CD4-positive, alpha-beta T cell (primary cell): ENCODE measurements at regions of chr2 and their contacts with region 1.

Region 1: GRCh38 chr2:38602732-38603401 is at the start of gene HNRNPLL:
- DNase-seq: peak; percentile 87 to 96 (median 94)
- ATAC-seq: peak; percentile 80
- H3K4me3 ChIP-seq: peak within 1 kb of the TSS; percentile 62
- H3K4me3 Mint-ChIP-seq: peak within 1 kb of the TSS; percentile 99
- H3K27ac ChIP-seq: peak within 1 kb of the TSS; percentile 58 to 66
- H3K27ac Mint-ChIP-seq: peak within 1 kb of the TSS; percentile 97
- H3K4me1 ChIP-seq: peaks cover 28% of the 10 kb centered on the region
- H3K4me1 Mint-ChIP-seq: peaks cover 56% of the 10 kb centered on the region
- H3K27me3 ChIP-seq: no peaks in the 10 kb centered on the region
- H3K27me3 Mint-ChIP-seq: no peaks in the 10 kb centered on the region
- CTCF ChIP-seq: no peak
- total RNA-seq, gene HNRNPLL: 44.9 to 46.5 TPM

Region 2: GRCh38 chr2:38581193-38582147 is 21.4 kb before region 1 on chr2:
- CTCF ChIA-PET with region 1: interaction called, 48 read pairs
- POLR2A ChIA-PET with region 1: interaction called, 14 read pairs
- intact Hi-C with region 1: loop called (anchors 1 to 2 kb)
- DNase-seq: peak in 9 of 14 experiments; percentile 9 to 87 (median 39)
- ATAC-seq: peak; percentile 87
- H3K4me3 ChIP-seq: no peak overlapping the region
- H3K4me3 Mint-ChIP-seq: no peak overlapping the region
- H3K27ac ChIP-seq: no peak overlapping the region
- H3K27ac Mint-ChIP-seq: peak overlapping the region; percentile 1
- H3K4me1 ChIP-seq: peaks cover 7% of the 10 kb centered on the region
- H3K4me1 Mint-ChIP-seq: peaks cover 22% of the 10 kb centered on the region
- H3K27me3 ChIP-seq: no peaks in the 10 kb centered on the region
- H3K27me3 Mint-ChIP-seq: no peaks in the 10 kb centered on the region
- CTCF ChIP-seq: peak; percentile 79

Region 3: DNA sequence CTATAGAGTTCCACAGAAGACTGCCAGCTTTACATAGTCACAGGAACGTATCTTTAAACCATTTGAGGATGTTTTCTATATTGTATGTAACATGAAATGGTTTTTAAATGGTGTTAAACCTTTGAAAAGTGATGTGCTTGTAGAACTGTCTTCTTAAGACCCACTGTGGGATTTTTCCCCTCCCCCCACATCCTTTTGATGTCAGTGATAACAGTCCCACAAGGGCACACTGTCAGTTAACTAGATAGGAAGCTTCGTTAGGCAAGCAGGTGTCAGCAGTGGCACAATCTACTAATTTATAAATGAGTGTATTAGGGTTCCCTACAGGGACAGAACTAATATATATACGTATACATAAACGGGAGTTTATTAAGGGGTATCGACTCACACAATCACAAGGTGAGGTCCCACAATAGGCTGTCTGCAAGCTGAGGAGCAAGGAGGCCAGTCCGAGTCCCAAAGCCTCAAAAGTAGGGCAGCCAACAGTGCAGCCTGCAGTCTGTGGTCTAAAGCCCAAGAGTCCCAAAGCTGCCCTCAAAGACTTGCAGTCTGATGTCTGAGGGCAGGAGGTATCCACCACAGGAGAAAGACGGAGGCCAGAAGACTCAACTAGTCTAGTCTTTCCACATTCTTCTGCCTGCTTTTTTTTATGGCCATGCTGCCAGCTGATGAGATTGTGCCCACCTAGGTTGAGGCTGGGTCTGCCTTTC is 23.6 kb after region 1 on chr2:
- CTCF ChIA-PET with region 1: interaction called, 17 read pairs
- POLR2A ChIA-PET with region 1: interaction called, 3 read pairs
- intact Hi-C with region 1: no loop called
- DNase-seq: peak in 10 of 14 experiments; percentile 7 to 85 (median 30)
- ATAC-seq: peak; percentile 76
- H3K4me3 ChIP-seq: no peak overlapping the region
- H3K4me3 Mint-ChIP-seq: peak overlapping the region; percentile 11
- H3K27ac ChIP-seq: peak overlapping the region in 1 of 2 donors; percentile 40
- H3K27ac Mint-ChIP-seq: peak overlapping the region; percentile 32
- H3K4me1 ChIP-seq: peaks cover 15% of the 10 kb centered on the region
- H3K4me1 Mint-ChIP-seq: peaks cover 18% of the 10 kb centered on the region
- H3K27me3 ChIP-seq: no peaks in the 10 kb centered on the region
- H3K27me3 Mint-ChIP-seq: no peaks in the 10 kb centered on the region
- CTCF ChIP-seq: no peak

Region 4: DNA sequence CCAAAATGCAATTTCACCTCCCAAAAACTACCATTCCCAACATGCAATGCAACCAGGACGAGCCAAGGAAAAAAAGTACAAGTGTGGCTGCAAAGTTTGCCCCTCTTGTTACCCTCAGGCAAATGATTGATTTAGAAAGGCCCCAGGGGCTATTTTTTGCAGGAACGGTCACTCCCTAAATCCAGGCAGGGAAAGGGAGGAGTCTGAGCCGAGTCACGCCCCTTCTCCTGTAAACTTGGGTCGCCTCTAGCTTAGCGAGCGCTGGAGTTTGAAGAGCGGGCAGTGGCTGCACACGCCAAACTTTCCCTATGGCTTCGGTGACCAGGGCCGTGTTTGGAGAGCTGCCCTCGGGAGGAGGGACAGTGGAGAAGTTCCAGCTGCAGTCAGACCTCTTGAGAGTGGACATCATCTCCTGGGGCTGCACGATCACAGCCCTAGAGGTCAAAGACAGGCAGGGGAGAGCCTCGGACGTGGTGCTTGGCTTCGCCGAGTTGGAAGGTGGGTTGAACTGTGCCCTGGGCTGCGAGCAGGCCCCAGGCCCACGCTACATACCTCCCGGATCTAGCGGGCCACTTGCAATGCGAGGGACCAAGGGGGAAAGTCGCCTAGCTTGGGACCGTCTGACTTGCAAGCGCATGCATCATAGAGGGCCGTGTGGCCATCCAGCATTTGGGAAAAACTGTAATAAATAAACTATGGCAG is 63.1 kb after region 1 on chr2 and contains the start of gene GALM:
- CTCF ChIA-PET with region 1: interaction called, 36 read pairs
- POLR2A ChIA-PET with region 1: interaction called, 71 read pairs
- intact Hi-C with region 1: loop called (anchors 2 kb)
- DNase-seq: peak in 13 of 14 experiments; percentile 10 to 75 (median 39)
- ATAC-seq: peak; percentile 28
- H3K4me3 ChIP-seq: peak within 1 kb of the TSS; percentile 81
- H3K4me3 Mint-ChIP-seq: peak within 1 kb of the TSS; percentile 80
- H3K27ac ChIP-seq: peak within 1 kb of the TSS; percentile 58 to 77
- H3K27ac Mint-ChIP-seq: peak within 1 kb of the TSS; percentile 81
- H3K4me1 ChIP-seq: peaks cover 75% of the 10 kb centered on the region
- H3K4me1 Mint-ChIP-seq: peaks cover 65% of the 10 kb centered on the region
- H3K27me3 ChIP-seq: no peaks in the 10 kb centered on the region
- H3K27me3 Mint-ChIP-seq: no peaks in the 10 kb centered on the region
- CTCF ChIP-seq: no peak
- total RNA-seq, gene GALM: 5.9 to 7.0 TPM

Region 5: DNA sequence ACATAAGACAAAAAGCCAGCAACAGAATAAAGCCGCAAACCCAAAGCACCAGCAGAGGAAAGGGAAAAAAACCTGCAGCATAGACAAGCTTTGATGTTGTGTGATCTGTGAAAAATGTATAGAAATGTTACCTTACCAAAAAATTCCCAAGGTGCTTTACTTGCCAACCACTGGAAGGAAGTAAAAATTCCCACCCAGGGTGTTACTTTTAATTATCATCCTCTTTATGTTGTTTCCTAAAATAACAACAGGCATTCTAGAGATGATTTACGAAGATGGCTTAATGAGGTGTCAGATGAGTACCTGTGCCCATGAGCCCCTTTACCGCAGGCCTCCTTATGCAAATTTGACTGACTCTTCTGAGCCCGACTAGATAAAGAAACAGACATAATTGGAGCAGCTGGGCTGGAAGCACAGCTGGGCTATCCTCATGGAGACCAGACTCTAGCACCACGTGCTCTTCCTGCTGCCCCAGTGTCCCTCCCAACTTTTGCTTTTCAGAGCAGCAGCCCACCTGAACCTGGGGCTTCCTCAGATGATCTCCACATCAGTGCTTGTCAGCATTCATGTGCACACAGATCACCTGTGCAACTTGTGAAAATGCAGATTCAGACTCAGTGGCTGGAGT is 106.8 kb after region 1 on chr2:
- CTCF ChIA-PET with region 1: interaction called, 6 read pairs
- POLR2A ChIA-PET with region 1: interaction called, 12 read pairs
- intact Hi-C with region 1: loop called in 1 of 2 experiments (anchors 5 kb)
- DNase-seq: peak in 5 of 14 experiments; percentile 53 to 88 (median 78)
- ATAC-seq: peak; percentile 77
- H3K4me3 ChIP-seq: peak overlapping the region; percentile 2
- H3K4me3 Mint-ChIP-seq: peak overlapping the region; percentile 82
- H3K27ac ChIP-seq: peak overlapping the region; percentile 50 to 55
- H3K27ac Mint-ChIP-seq: peak overlapping the region; percentile 93
- H3K4me1 ChIP-seq: peaks cover 67% of the 10 kb centered on the region
- H3K4me1 Mint-ChIP-seq: peaks cover 72% of the 10 kb centered on the region
- H3K27me3 ChIP-seq: no peaks in the 10 kb centered on the region
- H3K27me3 Mint-ChIP-seq: no peaks in the 10 kb centered on the region
- CTCF ChIP-seq: no peak

Region 6: GRCh38 chr2:38740851-38741731 is 138.2 kb after region 1 on chr2:
- CTCF ChIA-PET with region 1: interaction called, 7 read pairs
- POLR2A ChIA-PET with region 1: interaction called, 4 read pairs
- intact Hi-C with region 1: loop called (anchors 5 kb)
- DNase-seq: peak in 6 of 14 experiments; percentile 25 to 76 (median 51)
- ATAC-seq: peak; percentile 33
- H3K4me3 ChIP-seq: no peak overlapping the region
- H3K4me3 Mint-ChIP-seq: peak overlapping the region; percentile 1
- H3K27ac ChIP-seq: no peak overlapping the region
- H3K27ac Mint-ChIP-seq: peak overlapping the region; percentile 43
- H3K4me1 ChIP-seq: peaks cover 17% of the 10 kb centered on the region
- H3K4me1 Mint-ChIP-seq: peaks cover 54% of the 10 kb centered on the region
- H3K27me3 ChIP-seq: no peaks in the 10 kb centered on the region
- H3K27me3 Mint-ChIP-seq: no peaks in the 10 kb centered on the region
- CTCF ChIP-seq: peak; percentile 78